Stomach (tissue), 19 donors: ENCODE measurements at regions of chr16 and their contacts with region 1.

Region 1: GRCh38 chr16:88737298-88738150 is 31.2 kb downstream of the CTU2 start:
- DNase-seq: peak; percentile 80 to 93
- H3K4me3 ChIP-seq: no peak overlapping the region
- H3K27ac ChIP-seq: peak overlapping the region in 2 of 5 donors; percentile 25 to 38
- H3K4me1 ChIP-seq: peaks cover 0 to 11% (median 9%) of the 10 kb centered on the region in 4 donors
- H3K27me3 ChIP-seq: no peaks in the 10 kb centered on the region
- CTCF ChIP-seq: peak in 6 of 7 experiments; percentile 93 to 99 (median 98)
- EP300 ChIP-seq: no peak
- POLR2A ChIP-seq: no peak

Region 2: GRCh38 chr16:88424587-88425235 is 312.8 kb before region 1 on chr16:
- intact Hi-C with region 1: no loop called
- DNase-seq: no peak
- H3K4me3 ChIP-seq: no peak overlapping the region
- H3K27ac ChIP-seq: no peak overlapping the region
- H3K4me1 ChIP-seq: peaks cover 0 to 12% (median 12%) of the 10 kb centered on the region in 4 donors
- H3K27me3 ChIP-seq: peaks cover under 1 to 29% (median 11%) of the 10 kb centered on the region in 3 donors
- CTCF ChIP-seq: no peak
- EP300 ChIP-seq: no peak
- POLR2A ChIP-seq: no peak

Region 3: GRCh38 chr16:88497561-88498462 is 239.7 kb before region 1 on chr16:
- intact Hi-C with region 1: no loop called
- DNase-seq: peak in 1 of 2 donors; percentile 83
- H3K4me3 ChIP-seq: peak overlapping the region in 1 of 4 donors; percentile 6
- H3K27ac ChIP-seq: peak overlapping the region; percentile 59 to 88 (median 85)
- H3K4me1 ChIP-seq: peaks cover 41 to 61% (median 54%) of the 10 kb centered on the region in 4 donors
- H3K27me3 ChIP-seq: peaks cover 0 to 32% (median 0%) of the 10 kb centered on the region in 3 donors
- CTCF ChIP-seq: no peak
- EP300 ChIP-seq: no peak
- POLR2A ChIP-seq: no peak

Region 4: DNA sequence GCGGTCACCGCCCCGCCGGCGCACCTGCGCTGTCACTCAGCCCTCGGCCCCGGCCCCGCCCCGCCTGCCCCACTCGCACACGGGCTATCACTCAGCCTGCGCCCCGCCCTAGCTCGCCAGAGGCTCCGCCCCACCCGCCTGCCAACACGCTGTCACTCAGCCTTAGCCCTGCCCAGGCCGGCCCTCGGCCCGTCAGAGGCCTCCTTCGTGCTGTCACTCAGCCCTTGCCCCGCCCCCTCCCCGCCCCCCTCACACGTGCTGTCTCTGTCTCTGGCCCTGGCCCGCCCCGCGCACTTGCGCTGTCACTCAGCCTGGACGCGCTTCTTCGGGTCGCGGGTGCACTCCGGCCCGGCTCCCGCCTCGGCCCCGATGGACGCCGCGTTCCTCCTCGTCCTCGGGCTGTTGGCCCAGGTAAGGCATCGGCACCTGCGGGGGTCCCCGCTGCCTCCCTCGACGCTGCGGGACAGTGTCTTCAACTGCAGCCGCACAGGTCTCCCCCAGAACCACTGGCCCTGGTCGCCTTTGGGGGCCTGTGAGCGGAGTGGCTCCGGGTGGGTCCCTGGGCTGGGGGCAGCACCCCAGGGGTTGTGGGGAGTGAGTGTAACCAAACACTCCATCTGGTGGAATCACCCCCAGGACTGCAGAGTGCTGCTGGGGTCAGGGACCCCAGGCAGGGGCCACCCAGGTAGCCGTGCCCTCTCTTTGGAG is 434.1 kb after region 1 on chr16 and contains the start of gene CDH15:
- intact Hi-C with region 1: loop called (anchors 10 kb)
- DNase-seq: peak; percentile 97 to 98
- H3K4me3 ChIP-seq: peak within 1 kb of the TSS; percentile 27 to 48 (median 31)
- H3K27ac ChIP-seq: no peak within 1 kb of the TSS
- H3K4me1 ChIP-seq: peaks cover 23 to 32% (median 29%) of the 10 kb centered on the region in 4 donors
- H3K27me3 ChIP-seq: peaks cover 0 to 100% (median 45%) of the 10 kb centered on the region in 3 donors
- CTCF ChIP-seq: no peak
- EP300 ChIP-seq: no peak
- POLR2A ChIP-seq: no peak
- total RNA-seq, gene CDH15: not detected

Region 5: DNA sequence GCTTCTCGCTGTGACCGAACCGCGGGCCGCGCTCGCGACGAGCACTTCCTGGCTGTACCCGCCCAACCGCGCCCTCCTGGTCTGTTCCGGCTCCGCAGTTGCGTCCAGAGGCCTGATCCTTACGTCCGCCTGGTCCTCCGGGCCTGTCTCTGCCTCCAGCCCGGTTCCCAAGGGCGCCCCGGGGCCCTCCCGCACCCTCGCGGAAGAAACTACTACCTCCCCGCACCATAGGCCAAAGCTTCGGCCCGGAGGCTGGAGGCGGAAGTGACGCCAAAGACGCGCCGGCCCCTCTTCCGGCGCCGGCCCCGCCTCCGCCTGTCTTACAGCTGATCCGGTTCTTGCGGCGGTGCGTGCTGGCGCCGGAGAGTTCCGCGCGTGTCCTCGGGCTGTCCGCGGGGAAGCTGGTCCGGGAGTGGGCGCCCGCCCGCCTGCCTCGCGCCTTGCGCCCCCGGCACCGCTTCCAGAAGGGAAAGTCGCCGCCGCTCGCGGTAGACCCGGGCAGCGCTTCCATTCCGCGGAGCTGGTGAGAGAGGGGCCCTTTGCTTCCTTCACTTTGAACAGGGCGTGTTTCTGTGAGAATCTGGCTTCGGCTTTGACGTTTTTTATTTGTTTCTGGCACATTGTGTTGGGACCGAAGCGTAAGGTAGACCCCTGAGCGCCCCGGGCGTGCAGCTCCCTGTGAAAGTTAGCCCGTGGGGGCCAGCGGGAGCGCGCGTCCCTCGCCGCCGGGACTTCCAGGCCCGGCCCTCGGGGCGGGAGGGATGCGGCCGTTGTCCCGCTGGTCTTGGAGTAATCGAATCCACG is 480.1 kb after region 1 on chr16 and contains the start of gene ZNF778:
- intact Hi-C with region 1: loop called (anchors 10 kb)
- DNase-seq: peak; percentile 87 to 96
- H3K4me3 ChIP-seq: peak within 1 kb of the TSS; percentile 65 to 99 (median 84)
- H3K27ac ChIP-seq: peak within 1 kb of the TSS; percentile 92 to 99 (median 97)
- H3K4me1 ChIP-seq: peaks cover 22 to 40% (median 36%) of the 10 kb centered on the region in 4 donors
- H3K27me3 ChIP-seq: no peaks in the 10 kb centered on the region
- CTCF ChIP-seq: peak in 1 of 7 experiments; percentile 19
- EP300 ChIP-seq: no peak
- POLR2A ChIP-seq: no peak
- total RNA-seq, gene ZNF778: 4.1 to 11.7 (median 4.9) TPM